ENCODE measurements at regions of chr6 and their contacts with region 1.

Region 1: GRCh38 chr6:24666641-24667377 is at the starts of genes ACOT13 and TDP2:
- DNase-seq: peak; percentile 91 to 99 (median 94)

Region 2: DNA sequence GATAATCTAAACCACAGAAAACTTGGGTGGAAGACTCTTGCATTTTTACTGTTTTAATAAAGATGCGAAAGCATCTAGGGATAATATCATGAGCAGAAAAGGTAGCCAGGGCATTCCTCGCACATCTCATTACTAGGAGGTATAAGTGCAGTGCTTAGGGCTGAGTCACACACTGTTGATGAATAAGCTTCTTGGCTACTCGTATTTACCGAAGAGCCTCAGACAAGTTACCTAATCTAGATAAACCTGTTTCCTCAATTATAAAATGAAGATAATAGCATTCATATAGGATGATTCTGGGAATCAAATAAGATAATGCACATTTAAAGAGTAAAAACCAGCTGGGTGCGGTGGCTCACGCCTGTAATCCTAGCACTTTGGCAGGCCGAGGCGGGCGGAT is 20.0 kb before region 1 on chr6:
- intact Hi-C with region 1: no loop called
- DNase-seq: no peak

Region 3: DNA sequence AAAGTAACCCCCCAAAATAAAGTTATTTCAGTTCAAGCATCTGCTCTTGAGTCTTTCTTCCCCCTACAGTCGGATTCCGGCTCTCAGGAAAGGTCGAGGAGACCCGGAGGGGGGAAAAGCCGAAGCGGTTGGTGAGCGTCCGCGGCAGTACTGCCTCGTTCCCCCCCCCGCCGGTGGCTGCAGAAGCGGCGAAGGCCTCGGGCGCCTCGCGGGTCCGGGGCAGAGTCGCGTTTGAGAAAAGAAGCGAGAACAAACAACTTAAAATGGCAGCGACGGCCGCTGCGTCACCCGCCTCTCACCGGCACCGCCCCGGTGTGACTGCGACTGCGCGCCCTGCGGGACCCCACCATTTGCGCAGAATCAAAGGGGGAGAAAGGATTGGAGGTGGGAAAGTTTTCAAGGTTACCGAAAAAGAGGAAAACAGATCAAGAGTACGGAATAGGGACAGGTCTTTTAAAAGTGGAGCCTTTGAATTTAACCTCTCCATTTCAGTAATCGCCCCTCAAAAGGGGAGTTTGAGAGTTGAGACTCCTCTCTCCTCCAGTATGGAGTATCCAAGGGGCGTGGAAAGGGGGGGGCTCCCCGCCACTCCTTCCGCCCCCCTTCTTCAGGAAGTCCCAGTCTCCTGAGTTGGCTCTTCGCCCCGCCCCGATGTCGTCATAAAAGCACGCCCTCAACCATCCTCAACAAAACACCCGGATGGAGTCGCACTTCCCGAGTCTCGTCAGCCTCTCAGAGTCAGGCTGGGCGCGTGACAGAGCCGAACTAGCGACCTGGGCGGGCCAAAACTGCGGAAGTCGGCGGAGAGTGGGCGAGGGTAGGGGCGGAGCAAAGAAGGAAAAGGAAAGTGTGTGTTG is 54.0 kb after region 1 on chr6:
- intact Hi-C with region 1: loop called (anchors 1 kb)
- DNase-seq: peak; percentile 98 to 100 (median 100)

Region 4: GRCh38 chr6:24763578-24763977 is 96.8 kb after region 1 on chr6:
- intact Hi-C with region 1: no loop called
- DNase-seq: no peak

Region 5: DNA sequence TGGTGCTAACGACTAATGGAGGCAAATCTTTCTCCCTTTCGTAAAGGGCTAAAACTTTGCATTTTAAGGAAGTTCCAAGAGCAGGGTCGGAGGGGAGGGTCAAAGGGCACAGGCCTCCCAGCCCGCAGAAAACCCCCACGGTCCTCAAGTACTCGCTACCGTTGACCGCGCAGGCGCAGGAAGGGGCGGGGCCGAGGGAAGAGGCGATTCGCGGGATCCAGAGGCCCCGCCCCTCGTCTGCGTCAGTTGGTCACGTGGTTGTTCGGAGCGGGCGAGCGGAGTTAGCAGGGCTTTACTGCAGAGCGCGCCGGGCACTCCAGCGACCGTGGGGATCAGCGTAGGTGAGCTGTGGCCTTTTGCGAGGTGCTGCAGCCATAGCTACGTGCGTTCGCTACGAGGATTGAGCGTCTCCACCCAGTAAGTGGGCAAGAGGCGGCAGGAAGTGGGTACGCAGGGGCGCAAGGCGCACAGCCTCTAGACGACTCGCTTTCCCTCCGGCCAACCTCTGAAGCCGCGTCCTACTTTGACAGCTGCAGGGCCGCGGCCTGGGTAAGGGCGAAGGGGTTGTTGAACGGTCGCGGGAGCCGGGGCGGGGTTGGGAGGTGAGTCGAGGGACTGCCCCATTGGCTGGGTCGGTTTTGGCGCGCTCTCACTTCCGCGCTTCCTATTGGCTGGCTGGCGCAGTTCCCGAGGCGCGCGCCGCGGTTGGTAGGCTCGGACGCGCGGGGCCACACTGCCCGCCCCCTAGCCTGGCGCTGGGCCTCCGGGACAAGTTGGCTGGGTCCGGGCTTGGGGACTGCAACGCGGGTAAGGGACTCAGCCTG is 108.1 kb after region 1 on chr6 and contains the start of gene GMNN:
- intact Hi-C with region 1: loop called (anchors 10 kb)
- DNase-seq: peak; percentile 98 to 100 (median 99)